Activated naive CD4-positive, alpha-beta T cell treated with anti-CD3 and anti-CD28 coated beads for 36 hours (primary cell): ENCODE measurements at regions of chr5 and their contacts with region 1.

Region 1: GRCh38 chr5:152505442-152506042 is 100.5 kb upstream of the NMUR2 start:
- DNase-seq: peak; percentile 71
- H3K4me3 Mint-ChIP-seq: no peak overlapping the region
- H3K27ac Mint-ChIP-seq: no peak overlapping the region
- H3K4me1 Mint-ChIP-seq: peaks cover 2% of the 10 kb centered on the region
- H3K27me3 Mint-ChIP-seq: peaks cover 12% of the 10 kb centered on the region

Region 2: DNA sequence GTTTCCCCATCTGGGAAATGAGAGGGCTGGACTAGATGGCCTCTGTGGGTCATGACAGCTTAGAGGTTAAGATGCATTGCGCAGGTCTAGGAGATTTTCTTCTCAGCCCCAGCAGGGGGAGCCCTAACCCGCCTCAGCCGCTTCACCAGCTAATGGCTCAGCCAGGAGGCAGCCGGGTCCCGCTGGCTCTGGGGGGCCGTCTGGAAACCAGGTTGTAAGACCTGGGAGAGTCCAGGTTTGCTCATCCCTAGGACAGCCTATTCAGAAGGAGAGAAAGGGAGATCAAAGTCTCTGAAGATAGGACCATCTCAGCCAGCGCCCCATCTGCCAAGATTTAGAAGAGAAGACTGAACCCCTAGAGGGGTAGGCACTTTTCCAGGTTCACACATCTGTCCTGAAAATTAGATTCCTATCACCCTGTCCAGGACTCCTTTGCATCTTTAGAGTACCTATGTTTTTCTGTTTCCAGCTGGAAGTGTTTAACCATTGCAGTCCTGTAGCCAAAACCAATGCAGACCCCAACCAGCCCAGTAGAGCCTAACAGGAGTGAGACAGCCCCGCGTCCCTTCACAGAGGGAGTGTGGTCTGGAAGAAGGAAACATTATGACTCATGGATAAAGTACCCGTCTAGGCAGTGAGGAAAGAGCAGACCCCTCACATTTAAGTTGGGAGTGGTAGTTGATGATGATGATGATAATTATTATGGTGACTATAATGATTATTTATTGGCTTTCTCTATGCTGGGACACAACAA is 846.4 kb before region 1 on chr5:
- CTCF ChIA-PET with region 1: no interaction called
- intact Hi-C with region 1: loop called (anchors 2 kb)
- DNase-seq: peak; percentile 87
- H3K4me3 Mint-ChIP-seq: no peak overlapping the region
- H3K27ac Mint-ChIP-seq: no peak overlapping the region
- H3K4me1 Mint-ChIP-seq: peaks cover 17% of the 10 kb centered on the region
- H3K27me3 Mint-ChIP-seq: no peaks in the 10 kb centered on the region

Region 3: GRCh38 chr5:151825445-151825844 is 680.1 kb before region 1 on chr5:
- CTCF ChIA-PET with region 1: no interaction called
- intact Hi-C with region 1: loop called (anchors 1 kb)
- DNase-seq: peak; percentile 52
- H3K4me3 Mint-ChIP-seq: no peak overlapping the region
- H3K27ac Mint-ChIP-seq: no peak overlapping the region
- H3K4me1 Mint-ChIP-seq: peaks cover 3% of the 10 kb centered on the region
- H3K27me3 Mint-ChIP-seq: no peaks in the 10 kb centered on the region

Region 4: GRCh38 chr5:152349683-152350526 is 155.6 kb before region 1 on chr5:
- CTCF ChIA-PET with region 1: no interaction called
- intact Hi-C with region 1: loop called (anchors 1 kb)
- DNase-seq: peak; percentile 56
- H3K4me3 Mint-ChIP-seq: no peak overlapping the region
- H3K27ac Mint-ChIP-seq: no peak overlapping the region
- H3K4me1 Mint-ChIP-seq: no peaks in the 10 kb centered on the region
- H3K27me3 Mint-ChIP-seq: peaks cover 8% of the 10 kb centered on the region

Region 5: GRCh38 chr5:152379331-152379730 is 126.2 kb before region 1 on chr5:
- CTCF ChIA-PET with region 1: interaction called, 3 read pairs
- intact Hi-C with region 1: loop called (anchors 10 kb)
- DNase-seq: no peak
- H3K4me3 Mint-ChIP-seq: no peak overlapping the region
- H3K27ac Mint-ChIP-seq: no peak overlapping the region
- H3K4me1 Mint-ChIP-seq: no peaks in the 10 kb centered on the region
- H3K27me3 Mint-ChIP-seq: peaks cover 7% of the 10 kb centered on the region